ENCODE measurements at regions of chr6 and their contacts with region 1.

Region 1: GRCh38 chr6:30541515-30542403 is 14.5 kb downstream of the GNL1 start:
- DNase-seq: peak; percentile 91

Region 2: GRCh38 chr6:30483677-30484279 is 58.0 kb before region 1 on chr6:
- intact Hi-C with region 1: loop called (anchors 2 kb)
- DNase-seq: no peak

Region 3: DNA sequence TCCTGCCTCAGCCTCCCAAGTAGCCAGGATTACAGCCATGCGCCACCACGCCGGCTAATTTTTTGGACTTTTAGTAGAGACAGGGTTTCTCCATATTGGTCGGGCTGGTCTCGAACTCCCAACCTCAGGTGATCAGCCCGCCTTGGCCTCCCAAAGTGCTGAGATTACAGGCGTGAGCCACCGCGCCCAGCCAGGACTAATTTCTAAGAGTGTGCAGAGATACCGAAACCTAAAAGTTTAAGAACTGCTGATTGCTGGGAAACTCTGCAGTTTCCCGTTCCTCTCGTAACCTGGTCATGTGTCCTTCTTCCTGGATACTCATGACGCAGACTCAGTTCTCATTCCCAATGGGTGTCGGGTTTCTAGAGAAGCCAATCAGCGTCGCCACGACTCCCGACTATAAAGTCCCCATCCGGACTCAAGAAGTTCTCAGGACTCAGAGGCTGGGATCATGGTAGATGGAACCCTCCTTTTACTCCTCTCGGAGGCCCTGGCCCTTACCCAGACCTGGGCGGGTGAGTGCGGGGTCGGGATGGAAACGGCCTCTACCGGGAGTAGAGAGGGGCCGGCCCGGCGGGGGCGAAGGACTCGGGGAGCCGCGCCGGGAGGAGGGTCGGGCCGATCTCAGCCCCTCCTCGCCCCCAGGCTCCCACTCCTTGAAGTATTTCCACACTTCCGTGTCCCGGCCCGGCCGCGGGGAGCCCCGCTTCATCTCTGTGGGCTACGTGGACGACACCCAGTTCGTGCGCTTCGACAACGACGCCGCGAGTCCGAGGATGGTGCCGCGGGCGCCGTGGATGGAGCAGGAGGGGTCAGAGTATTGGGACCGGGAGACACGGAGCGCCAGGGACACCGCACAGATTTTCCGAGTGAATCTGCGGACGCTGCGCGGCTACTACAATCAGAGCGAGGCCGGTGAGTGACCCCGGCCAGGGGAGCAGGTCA is 52.4 kb before region 1 on chr6 and contains the start of gene HLA-E:
- intact Hi-C with region 1: loop called (anchors 2 kb)
- DNase-seq: peak; percentile 93
- total RNA-seq, gene HLA-E: 126 TPM

Region 4: GRCh38 chr6:30515932-30516753 is 25.6 kb before region 1 on chr6:
- intact Hi-C with region 1: loop called (anchors 1 kb)
- DNase-seq: peak; percentile 94

Region 5: GRCh38 chr6:30600451-30600961 is 58.7 kb after region 1 on chr6:
- intact Hi-C with region 1: loop called (anchors 5 kb)
- DNase-seq: no peak

Region 6: GRCh38 chr6:30616811-30617564 is 75.2 kb after region 1 on chr6 and contains the start of gene PPP1R10:
- intact Hi-C with region 1: no loop called
- DNase-seq: peak; percentile 99
- total RNA-seq, gene PPP1R10: 30.0 TPM

Region 7: DNA sequence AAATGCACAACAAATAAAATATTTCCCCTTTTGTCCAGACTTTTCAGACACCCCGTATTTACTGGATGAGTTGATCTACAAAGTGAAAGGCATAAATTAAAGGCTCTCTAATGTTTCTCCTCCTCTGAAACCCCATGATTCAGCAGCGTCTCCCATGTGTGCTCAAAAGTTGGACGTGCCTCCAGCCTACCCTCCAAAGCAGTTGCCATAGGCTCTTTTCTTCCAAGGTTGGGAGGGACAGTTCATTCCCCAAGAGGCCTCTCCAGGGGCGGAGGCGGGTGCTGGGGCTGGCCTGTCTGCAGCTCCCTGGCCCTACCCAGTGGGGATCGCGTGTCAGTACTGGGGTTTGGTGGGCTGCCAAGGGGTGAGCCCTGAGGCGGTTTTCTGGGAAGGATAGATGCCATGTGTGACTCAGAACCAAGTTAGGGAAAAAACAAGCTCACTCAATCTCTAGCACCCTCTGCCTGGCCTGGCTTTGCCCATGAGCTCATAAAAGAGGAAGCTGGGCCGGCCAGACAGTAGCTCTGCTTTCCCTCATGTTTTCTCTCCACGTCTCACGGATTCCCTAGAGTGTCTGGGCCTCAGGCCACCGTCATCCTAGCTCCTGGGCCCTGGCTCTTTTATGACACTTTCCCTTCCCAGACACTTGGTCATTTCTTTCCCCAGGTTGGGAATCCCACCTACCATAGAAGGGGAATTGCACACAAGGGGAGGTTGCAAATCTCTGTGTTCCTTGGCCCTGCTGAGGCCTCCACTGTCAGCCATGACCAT is 210.6 kb after region 1 on chr6:
- intact Hi-C with region 1: no loop called
- DNase-seq: peak; percentile 95

Region 8: DNA sequence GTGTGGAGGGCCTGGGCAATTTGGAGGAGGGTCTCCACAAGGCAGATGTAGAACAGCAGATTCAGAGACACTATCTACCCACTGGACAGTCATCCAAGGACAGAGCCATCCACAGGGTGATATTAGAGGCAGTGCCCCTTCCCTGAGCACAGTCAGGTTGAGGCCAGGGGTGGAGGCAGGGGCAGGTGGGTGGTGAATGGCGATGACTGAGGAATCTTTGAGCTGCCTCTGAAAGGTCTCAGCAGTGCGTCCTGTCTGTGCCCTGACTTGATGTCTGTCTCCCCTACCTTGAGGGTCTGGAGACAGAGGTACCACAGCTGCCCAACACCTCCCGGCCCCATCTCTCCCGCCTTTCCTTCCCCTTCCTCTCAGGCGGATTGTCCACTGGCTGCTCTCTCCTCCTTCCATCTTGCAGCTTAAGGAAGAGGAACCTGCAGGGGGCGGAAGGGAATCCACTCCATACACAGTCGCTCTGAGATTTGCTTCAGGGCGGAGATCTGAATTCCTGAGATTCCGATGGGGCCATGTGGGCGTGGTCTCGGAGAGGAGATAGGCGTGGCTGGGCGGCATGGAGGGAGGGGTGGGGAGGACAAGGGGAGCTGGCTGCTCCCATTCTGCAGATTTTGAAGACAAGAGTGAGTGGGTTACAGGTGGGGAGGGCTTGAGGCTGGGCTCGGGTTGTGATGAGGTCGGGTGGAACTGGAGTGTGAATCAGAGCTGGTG is 400.7 kb after region 1 on chr6:
- intact Hi-C with region 1: no loop called
- DNase-seq: no peak

Region 9: DNA sequence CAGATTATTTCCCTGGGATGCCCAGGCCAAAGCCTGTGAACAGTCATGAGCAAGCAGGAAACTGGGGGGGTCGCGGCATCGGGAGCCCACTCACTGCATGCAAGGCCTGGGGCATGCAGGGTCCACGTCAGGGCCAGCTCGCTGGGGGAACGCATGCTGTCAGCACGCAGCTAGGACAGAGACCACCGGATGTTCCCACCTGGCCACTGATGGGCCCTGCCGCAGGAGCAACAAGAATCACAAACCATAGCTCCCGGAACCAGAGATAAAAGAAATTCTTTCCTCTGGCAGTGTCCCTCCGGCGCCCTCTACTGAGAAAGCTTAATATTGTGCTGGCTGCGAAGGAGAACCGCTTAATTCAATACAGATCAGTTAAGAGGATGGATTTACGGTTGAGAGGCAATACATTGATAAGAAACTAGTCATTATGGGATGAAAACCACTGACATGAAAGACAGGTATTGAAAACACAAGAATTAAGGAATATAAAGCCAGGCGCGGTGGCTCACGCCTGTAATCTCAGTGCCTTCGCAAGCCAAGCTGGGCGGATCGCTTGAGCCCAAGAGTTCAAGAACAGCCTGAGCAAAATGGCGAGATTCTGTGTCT is 538.0 kb after region 1 on chr6:
- intact Hi-C with region 1: loop called (anchors 5 kb)
- DNase-seq: no peak

Measured in cardiac septum (tissue), 1 donor.